ENCODE measurements at regions of chr14 and their contacts with region 1.

Region 1: DNA sequence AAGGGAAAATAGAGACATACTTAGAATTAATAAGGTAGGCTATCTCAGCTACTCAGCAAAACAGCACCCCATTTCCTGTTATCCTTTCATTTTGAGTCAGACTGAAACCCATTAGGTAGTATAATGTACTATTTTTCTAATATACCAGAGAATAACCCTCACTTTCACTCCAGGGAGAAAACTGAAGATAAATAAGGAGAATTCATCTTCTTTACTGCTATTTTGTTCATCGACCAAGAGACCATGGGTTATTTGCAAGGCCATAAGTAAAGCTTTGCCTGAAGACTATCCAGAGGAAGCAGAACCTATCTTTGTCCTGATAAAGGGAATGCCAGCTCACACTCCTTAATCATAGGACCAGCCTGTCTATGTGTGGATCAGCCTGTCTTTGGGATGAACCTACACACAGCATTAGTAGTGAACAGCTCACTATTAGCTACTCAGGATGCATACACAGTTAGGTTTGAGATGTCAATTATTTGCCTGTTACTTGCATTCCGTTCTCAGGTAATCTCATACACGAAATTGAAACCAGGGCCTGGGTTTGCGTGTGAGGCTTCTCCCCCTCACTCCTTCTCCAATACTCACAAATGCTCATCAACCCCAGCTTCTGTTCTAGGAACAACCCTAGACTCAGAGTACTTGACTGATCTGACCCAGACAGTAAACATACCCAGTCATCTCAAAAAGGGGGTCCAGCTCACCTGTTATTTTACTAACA is 124.4 kb downstream of the DAD1 start:
- DNase-seq: no peak
- H3K4me3 ChIP-seq: no peak overlapping the region
- H3K27ac ChIP-seq: no peak overlapping the region
- H3K4me1 ChIP-seq: peaks cover 73% of the 10 kb centered on the region
- CTCF ChIP-seq: no peak

Region 2: GRCh38 chr14:22418631-22419030 is 46.0 kb before region 1 on chr14:
- CTCF ChIA-PET with region 1: no interaction called
- POLR2A ChIA-PET with region 1: interaction called, 18 read pairs
- intact Hi-C with region 1: no loop called
- DNase-seq: peak; percentile 74
- H3K4me3 ChIP-seq: peak overlapping the region; percentile 26
- H3K27ac ChIP-seq: peak overlapping the region; percentile 78
- H3K4me1 ChIP-seq: peaks cover 61% of the 10 kb centered on the region
- CTCF ChIP-seq: no peak

Region 3: GRCh38 chr14:22939684-22940083 is 475.1 kb after region 1 on chr14:
- CTCF ChIA-PET with region 1: no interaction called
- POLR2A ChIA-PET with region 1: no interaction called
- intact Hi-C with region 1: no loop called
- DNase-seq: no peak
- H3K4me3 ChIP-seq: no peak overlapping the region
- H3K27ac ChIP-seq: no peak overlapping the region
- H3K4me1 ChIP-seq: no peaks in the 10 kb centered on the region
- CTCF ChIP-seq: no peak